Left cardiac atrium (tissue), 4 donors: ENCODE measurements at regions of chr2 and their contacts with region 1.

Region 1: GRCh38 chr2:36371928-36372391 is 16.4 kb downstream of the CRIM1 start:
- DNase-seq: no peak
- ATAC-seq: no peak

Region 2: GRCh38 chr2:36413218-36413617 is 41.3 kb after region 1 on chr2:
- intact Hi-C with region 1: loop called in 1 of 2 experiments (anchors 5 kb)
- DNase-seq: no peak
- ATAC-seq: no peak